Stomach (tissue), 19 donors: ENCODE measurements at regions of chr6 and their contacts with region 1.

Region 1: GRCh38 chr6:36594029-36594815 is at the start of gene SRSF3:
- DNase-seq: peak; percentile 97 to 100
- H3K4me3 ChIP-seq: peak within 1 kb of the TSS; percentile 60 to 93 (median 76)
- H3K27ac ChIP-seq: peak within 1 kb of the TSS; percentile 96 to 99 (median 97)
- H3K4me1 ChIP-seq: peaks cover 24 to 46% (median 37%) of the 10 kb centered on the region in 4 donors
- H3K27me3 ChIP-seq: no peaks in the 10 kb centered on the region
- CTCF ChIP-seq: peak in 5 of 7 experiments; percentile 36 to 66 (median 52)
- EP300 ChIP-seq: no peak
- POLR2A ChIP-seq: peak in 2 of 4 donors; percentile 96 to 99
- total RNA-seq, gene SRSF3: 77.2 to 250 (median 145) TPM

Region 2: GRCh38 chr6:36550473-36551000 is 43.7 kb before region 1 on chr6:
- intact Hi-C with region 1: loop called (anchors 5 kb)
- DNase-seq: no peak
- H3K4me3 ChIP-seq: no peak overlapping the region
- H3K27ac ChIP-seq: no peak overlapping the region
- H3K4me1 ChIP-seq: peaks cover 5 to 22% (median 15%) of the 10 kb centered on the region in 4 donors
- H3K27me3 ChIP-seq: no peaks in the 10 kb centered on the region
- CTCF ChIP-seq: no peak
- EP300 ChIP-seq: no peak
- POLR2A ChIP-seq: no peak

Region 3: GRCh38 chr6:37092923-37093920 is 499.0 kb after region 1 on chr6:
- intact Hi-C with region 1: no loop called
- DNase-seq: no peak
- H3K4me3 ChIP-seq: no peak overlapping the region
- H3K27ac ChIP-seq: no peak overlapping the region
- H3K4me1 ChIP-seq: peaks cover 0 to 19% (median 0%) of the 10 kb centered on the region in 4 donors
- H3K27me3 ChIP-seq: no peaks in the 10 kb centered on the region
- CTCF ChIP-seq: no peak
- EP300 ChIP-seq: no peak
- POLR2A ChIP-seq: no peak